PC-9 (cell line): ENCODE measurements at regions of chrX and their contacts with region 1.

Region 1: DNA sequence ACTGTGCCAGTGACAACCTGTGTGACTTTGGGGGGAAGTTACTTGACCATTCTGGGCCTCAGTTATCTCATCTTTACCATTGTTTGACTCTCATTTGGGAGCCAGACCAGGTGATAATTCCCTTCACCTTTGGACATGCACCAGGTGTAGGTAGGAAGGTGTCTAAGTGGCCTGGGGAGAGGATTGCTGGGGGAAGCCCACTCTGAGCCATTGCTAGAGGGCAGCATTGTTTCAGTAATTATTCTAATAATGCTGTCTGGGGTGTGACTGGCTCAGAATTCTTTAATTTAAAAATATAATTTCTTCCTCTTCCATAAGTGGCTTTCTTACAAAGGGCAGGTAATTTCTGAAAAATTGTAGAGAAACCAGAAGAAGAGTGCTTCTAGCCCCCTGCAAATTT is 104.3 kb downstream of the RTL9 start:
- DNase-seq: peak in 1 of 2 experiments; percentile 15
- H3K4me3 ChIP-seq: no peak overlapping the region
- H3K27ac ChIP-seq: no peak overlapping the region
- H3K4me1 ChIP-seq: no peaks in the 10 kb centered on the region
- H3K27me3 ChIP-seq: no peaks in the 10 kb centered on the region
- CTCF ChIP-seq: peak; percentile 61

Region 2: GRCh38 chrX:110665223-110666002 is 202.5 kb after region 1 on chrX:
- CTCF ChIA-PET with region 1: no interaction called
- POLR2A ChIA-PET with region 1: no interaction called
- intact Hi-C with region 1: loop called (anchors 2 kb)
- DNase-seq: peak in 1 of 2 experiments; percentile 38
- H3K4me3 ChIP-seq: no peak overlapping the region
- H3K27ac ChIP-seq: no peak overlapping the region
- H3K4me1 ChIP-seq: no peaks in the 10 kb centered on the region
- H3K27me3 ChIP-seq: no peaks in the 10 kb centered on the region
- CTCF ChIP-seq: peak; percentile 74